PC-3 (cell line): ENCODE measurements at regions of chr3 and their contacts with region 1.

Region 1: GRCh38 chr3:52851348-52851747 is 16.5 kb upstream of the MUSTN1 start:
- DNase-seq: peak; percentile 51
- ATAC-seq: peak; percentile 80
- H3K4me3 ChIP-seq: no peak overlapping the region
- H3K27ac ChIP-seq: no peak overlapping the region
- H3K4me1 ChIP-seq: no peaks in the 10 kb centered on the region
- H3K27me3 ChIP-seq: no peaks in the 10 kb centered on the region
- CTCF ChIP-seq: peak; percentile 73

Region 2: GRCh38 chr3:52536369-52537164 is 314.8 kb before region 1 on chr3 and contains the start of gene UQCC5:
- CTCF ChIA-PET with region 1: no interaction called
- POLR2A ChIA-PET with region 1: no interaction called
- intact Hi-C with region 1: no loop called
- DNase-seq: peak; percentile 99
- ATAC-seq: peak; percentile 82
- H3K4me3 ChIP-seq: peak within 1 kb of the TSS; percentile 90
- H3K27ac ChIP-seq: peak within 1 kb of the TSS; percentile 48
- H3K4me1 ChIP-seq: peaks cover 46% of the 10 kb centered on the region
- H3K27me3 ChIP-seq: no peaks in the 10 kb centered on the region
- CTCF ChIP-seq: no peak
- total RNA-seq, gene UQCC5: 14.5 and 26.1 TPM in 2 replicates

Region 3: GRCh38 chr3:52934630-52935530 is 83.5 kb after region 1 on chr3:
- CTCF ChIA-PET with region 1: no interaction called
- POLR2A ChIA-PET with region 1: no interaction called
- intact Hi-C with region 1: loop called (anchors 1 kb)
- DNase-seq: peak; percentile 64
- ATAC-seq: peak; percentile 99
- H3K4me3 ChIP-seq: no peak overlapping the region
- H3K27ac ChIP-seq: no peak overlapping the region
- H3K4me1 ChIP-seq: no peaks in the 10 kb centered on the region
- H3K27me3 ChIP-seq: no peaks in the 10 kb centered on the region
- CTCF ChIP-seq: peak; percentile 88